Activated CD4-positive, alpha-beta T cell treated with anti-CD3 and anti-CD28 coated beads, Interleukin-2, amount 10 ng/mL, durations not matched to agents 7 days and 5 days (primary cell): ENCODE measurements at regions of chr1 and their contacts with region 1.

Region 1: GRCh38 chr1:111755331-111756123 is at the start of gene DDX20:
- DNase-seq: peak; percentile 93
- H3K4me3 Mint-ChIP-seq: peak within 1 kb of the TSS; percentile 86
- H3K27ac Mint-ChIP-seq: peak within 1 kb of the TSS; percentile 96
- H3K4me1 Mint-ChIP-seq: peaks cover 49% of the 10 kb centered on the region
- H3K27me3 Mint-ChIP-seq: no peaks in the 10 kb centered on the region
- total RNA-seq, gene DDX20: 14.4 to 18.9 TPM

Region 2: DNA sequence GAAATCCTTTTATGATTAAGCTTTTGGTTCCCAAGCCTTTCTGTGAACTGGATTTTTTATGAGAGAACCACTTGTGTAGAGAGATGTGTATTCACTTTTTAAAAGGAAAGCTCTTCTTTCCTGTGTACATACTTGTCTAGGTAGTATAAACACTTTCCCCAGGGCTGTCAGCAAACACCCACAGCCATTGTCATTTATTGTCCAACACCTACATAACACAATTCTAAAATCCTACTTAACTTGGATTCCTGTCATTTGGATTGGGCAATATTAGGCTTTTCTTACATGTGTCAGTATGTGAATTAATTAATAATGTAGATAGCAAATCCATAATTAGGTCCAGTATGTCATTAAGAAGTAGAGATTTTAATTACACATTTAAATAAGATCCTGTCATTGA is 12.5 kb after region 1 on chr1:
- CTCF ChIA-PET with region 1: interaction called, 12 read pairs
- POLR2A ChIA-PET with region 1: no interaction called
- DNase-seq: no peak
- H3K4me3 Mint-ChIP-seq: no peak overlapping the region
- H3K27ac Mint-ChIP-seq: no peak overlapping the region
- H3K4me1 Mint-ChIP-seq: peaks cover 6% of the 10 kb centered on the region
- H3K27me3 Mint-ChIP-seq: no peaks in the 10 kb centered on the region

Region 3: GRCh38 chr1:111837393-111838190 is 82.1 kb after region 1 on chr1:
- CTCF ChIA-PET with region 1: no interaction called
- POLR2A ChIA-PET with region 1: no interaction called
- DNase-seq: no peak
- H3K4me3 Mint-ChIP-seq: no peak overlapping the region
- H3K27ac Mint-ChIP-seq: no peak overlapping the region
- H3K4me1 Mint-ChIP-seq: no peaks in the 10 kb centered on the region
- H3K27me3 Mint-ChIP-seq: peaks cover 9% of the 10 kb centered on the region

Region 4: GRCh38 chr1:111864791-111865190 is 109.3 kb after region 1 on chr1:
- CTCF ChIA-PET with region 1: no interaction called
- POLR2A ChIA-PET with region 1: no interaction called
- DNase-seq: peak; percentile 13
- H3K4me3 Mint-ChIP-seq: no peak overlapping the region
- H3K27ac Mint-ChIP-seq: no peak overlapping the region
- H3K4me1 Mint-ChIP-seq: peaks cover 3% of the 10 kb centered on the region
- H3K27me3 Mint-ChIP-seq: peaks cover 15% of the 10 kb centered on the region

Region 5: GRCh38 chr1:112105557-112105956 is 350.0 kb after region 1 on chr1:
- CTCF ChIA-PET with region 1: no interaction called
- POLR2A ChIA-PET with region 1: no interaction called
- DNase-seq: no peak
- H3K4me3 Mint-ChIP-seq: no peak overlapping the region
- H3K27ac Mint-ChIP-seq: no peak overlapping the region
- H3K4me1 Mint-ChIP-seq: no peaks in the 10 kb centered on the region
- H3K27me3 Mint-ChIP-seq: peaks cover 23% of the 10 kb centered on the region